Posterior vena cava (tissue), 2 donors: ENCODE measurements at regions of chr16 and their contacts with region 1.

Region 1: GRCh38 chr16:77402118-77402517 is 32.7 kb downstream of the ADAMTS18 start:
- DNase-seq: no peak

Region 2: GRCh38 chr16:77353587-77354263 is 48.4 kb before region 1 on chr16:
- intact Hi-C with region 1: no loop called
- DNase-seq: no peak

Region 3: GRCh38 chr16:77364770-77365169 is 37.3 kb before region 1 on chr16:
- intact Hi-C with region 1: no loop called
- DNase-seq: no peak

Region 4: GRCh38 chr16:77375396-77375795 is 26.7 kb before region 1 on chr16:
- intact Hi-C with region 1: loop called in 1 of 2 experiments (anchors 1 kb)
- DNase-seq: no peak

Region 5: DNA sequence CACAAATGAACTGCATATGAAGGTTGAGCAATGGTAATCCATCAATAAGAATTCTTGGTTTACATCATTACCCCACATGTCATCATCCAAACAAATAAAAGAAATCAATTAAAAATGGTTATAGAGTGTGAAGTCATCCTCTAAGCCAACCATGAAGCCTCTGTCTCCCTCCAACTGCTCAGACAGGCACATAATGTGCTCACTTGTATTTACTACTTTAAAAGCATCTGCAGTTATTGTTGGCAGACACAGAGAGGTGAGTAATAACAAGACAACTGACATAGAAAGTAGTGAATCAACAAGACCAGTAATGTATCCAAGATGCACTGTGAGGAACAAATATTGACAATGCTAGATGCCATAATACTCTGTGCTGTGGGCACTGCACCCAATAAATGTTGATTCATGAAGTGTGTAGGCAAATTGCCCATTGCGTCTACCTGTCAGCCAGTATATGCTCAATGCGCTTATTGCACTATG is 12.7 kb after region 1 on chr16:
- intact Hi-C with region 1: no loop called
- DNase-seq: no peak